Activated CD4-positive, alpha-beta memory T cell treated with anti-CD3 and anti-CD28 coated beads, Interleukin-2, amount 10 ng/mL, durations not matched to agents 7 days and 5 days (primary cell): ENCODE measurements at regions of chr19 and their contacts with region 1.

Region 1: GRCh38 chr19:41298348-41298964 is 11.5 kb upstream of the CCDC97 start:
- DNase-seq: no peak
- H3K4me3 Mint-ChIP-seq: no peak overlapping the region
- H3K27ac Mint-ChIP-seq: peak overlapping the region; percentile 98
- H3K4me1 Mint-ChIP-seq: peaks cover 91% of the 10 kb centered on the region
- H3K27me3 Mint-ChIP-seq: no peaks in the 10 kb centered on the region

Region 2: DNA sequence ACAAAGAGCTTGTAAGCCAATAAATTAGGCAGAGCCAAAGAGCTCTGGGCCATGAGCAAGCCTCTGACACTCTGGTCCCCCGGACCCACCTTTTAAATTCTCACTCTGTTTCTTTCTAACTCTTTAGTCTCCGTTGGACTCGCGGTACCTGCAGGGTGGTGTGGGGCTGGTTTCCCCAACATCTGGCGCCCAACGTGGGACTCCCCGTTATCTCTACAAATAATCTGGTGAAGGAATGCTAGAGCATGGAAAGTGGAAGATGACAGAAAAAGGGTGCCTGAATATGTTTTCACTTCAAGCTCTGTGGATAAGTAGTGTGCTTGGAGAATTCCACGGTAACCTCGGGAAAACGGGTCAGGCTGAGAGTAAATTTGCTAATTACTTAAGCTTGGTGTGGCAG is 343.9 kb before region 1 on chr19:
- CTCF ChIA-PET with region 1: no interaction called
- POLR2A ChIA-PET with region 1: no interaction called
- DNase-seq: no peak
- H3K4me3 Mint-ChIP-seq: no peak overlapping the region
- H3K27ac Mint-ChIP-seq: no peak overlapping the region
- H3K4me1 Mint-ChIP-seq: no peaks in the 10 kb centered on the region
- H3K27me3 Mint-ChIP-seq: no peaks in the 10 kb centered on the region

Region 3: GRCh38 chr19:41327576-41328156 is 29.2 kb after region 1 on chr19:
- CTCF ChIA-PET with region 1: no interaction called
- POLR2A ChIA-PET with region 1: interaction called, 45 read pairs
- DNase-seq: peak; percentile 89
- H3K4me3 Mint-ChIP-seq: peak overlapping the region; percentile 68
- H3K27ac Mint-ChIP-seq: peak overlapping the region; percentile 95
- H3K4me1 Mint-ChIP-seq: peaks cover 73% of the 10 kb centered on the region
- H3K27me3 Mint-ChIP-seq: no peaks in the 10 kb centered on the region